ENCODE measurements at regions of chrX and their contacts with region 1.

Region 1: DNA sequence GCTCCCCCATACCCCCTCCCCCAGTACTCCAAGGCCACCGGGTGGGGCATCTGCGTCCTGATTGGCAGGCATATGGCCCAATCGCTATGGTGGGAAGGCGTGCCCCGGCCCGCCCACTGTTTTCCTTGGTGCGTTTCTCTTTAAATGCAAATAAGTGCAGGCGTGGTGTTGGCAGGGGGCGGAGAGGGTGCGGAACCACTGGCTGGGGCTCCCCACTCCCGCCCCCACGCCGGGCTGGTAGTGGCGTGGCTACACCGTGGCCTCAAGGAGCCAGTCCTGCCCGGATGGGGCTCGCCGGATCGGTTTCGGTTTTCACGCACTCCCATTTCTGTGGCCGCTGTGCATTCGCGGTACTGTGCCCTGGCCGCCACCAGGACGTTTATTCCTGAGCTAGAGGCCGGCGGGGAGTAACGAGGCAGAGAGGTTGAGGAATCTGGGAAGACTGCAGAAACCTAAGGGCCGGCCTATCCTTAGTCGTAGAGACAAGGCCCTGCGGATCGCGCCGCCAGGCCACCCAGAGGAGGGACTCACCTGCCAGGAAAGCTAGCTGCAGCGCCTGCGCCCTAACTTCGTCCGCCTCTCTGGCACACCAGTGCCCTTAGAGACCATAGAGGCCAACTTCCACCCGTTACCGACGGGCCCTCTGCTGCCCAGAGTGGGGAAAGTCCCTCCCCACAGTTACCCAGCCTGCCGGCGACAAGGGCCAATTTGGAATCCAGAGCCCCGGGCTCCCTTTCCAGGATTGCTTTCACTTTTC is 405 bp upstream of the AMER1 start:
- DNase-seq: peak; percentile 86 to 94
- H3K4me3 ChIP-seq: peak overlapping the region; percentile 81
- H3K27ac ChIP-seq: peak overlapping the region; percentile 84
- H3K4me1 ChIP-seq: peaks cover 11% of the 10 kb centered on the region
- H3K27me3 ChIP-seq: no peaks in the 10 kb centered on the region
- CTCF ChIP-seq: no peak; the same call in 1 of the 2 replicates

Region 2: GRCh38 chrX:64093761-64094160 is 112.2 kb before region 1 on chrX:
- CTCF ChIA-PET with region 1: no interaction called
- POLR2A ChIA-PET with region 1: no interaction called
- intact Hi-C with region 1: loop called (anchors 5 kb)
- DNase-seq: no peak
- H3K4me3 ChIP-seq: no peak overlapping the region
- H3K27ac ChIP-seq: no peak overlapping the region
- H3K4me1 ChIP-seq: no peaks in the 10 kb centered on the region
- H3K27me3 ChIP-seq: no peaks in the 10 kb centered on the region
- CTCF ChIP-seq: peak; percentile 61; the same call in 1 of the 2 replicates

Region 3: GRCh38 chrX:65534450-65535292 is 1328.8 kb after region 1 on chrX and contains the start of gene LAS1L:
- CTCF ChIA-PET with region 1: no interaction called
- POLR2A ChIA-PET with region 1: no interaction called
- intact Hi-C with region 1: loop called (anchors 10 kb)
- DNase-seq: peak; percentile 90 to 91
- H3K4me3 ChIP-seq: peak within 1 kb of the TSS; percentile 67
- H3K27ac ChIP-seq: peak within 1 kb of the TSS; percentile 49; the same call in 1 of the 2 replicates
- H3K4me1 ChIP-seq: no peaks in the 10 kb centered on the region
- H3K27me3 ChIP-seq: no peaks in the 10 kb centered on the region
- CTCF ChIP-seq: no peak
- total RNA-seq, gene LAS1L: 47.3 and 48.3 TPM in 2 replicates

Measured in PC-9 (cell line).